Pancreas (tissue), 10 donors: ENCODE measurements at regions of chr7 and their contacts with region 1.

Region 1: GRCh38 chr7:143240291-143241168 is 18.7 kb downstream of the TAS2R40 start:
- DNase-seq: peak in 4 of 6 donors; percentile 46 to 71 (median 54)
- ATAC-seq: peak; percentile 74 to 99 (median 96)
- H3K4me3 ChIP-seq: no peak overlapping the region
- H3K27ac ChIP-seq: no peak overlapping the region
- H3K4me1 ChIP-seq: no peaks in the 10 kb centered on the region
- H3K27me3 ChIP-seq: no peaks in the 10 kb centered on the region
- CTCF ChIP-seq: peak; percentile 79 to 90 (median 82)

Region 2: GRCh38 chr7:143181349-143181748 is 59.2 kb before region 1 on chr7:
- intact Hi-C with region 1: no loop called
- DNase-seq: no peak
- ATAC-seq: no peak
- H3K4me3 ChIP-seq: no peak overlapping the region
- H3K27ac ChIP-seq: no peak overlapping the region
- H3K4me1 ChIP-seq: no peaks in the 10 kb centered on the region
- H3K27me3 ChIP-seq: no peaks in the 10 kb centered on the region
- CTCF ChIP-seq: no peak

Region 3: DNA sequence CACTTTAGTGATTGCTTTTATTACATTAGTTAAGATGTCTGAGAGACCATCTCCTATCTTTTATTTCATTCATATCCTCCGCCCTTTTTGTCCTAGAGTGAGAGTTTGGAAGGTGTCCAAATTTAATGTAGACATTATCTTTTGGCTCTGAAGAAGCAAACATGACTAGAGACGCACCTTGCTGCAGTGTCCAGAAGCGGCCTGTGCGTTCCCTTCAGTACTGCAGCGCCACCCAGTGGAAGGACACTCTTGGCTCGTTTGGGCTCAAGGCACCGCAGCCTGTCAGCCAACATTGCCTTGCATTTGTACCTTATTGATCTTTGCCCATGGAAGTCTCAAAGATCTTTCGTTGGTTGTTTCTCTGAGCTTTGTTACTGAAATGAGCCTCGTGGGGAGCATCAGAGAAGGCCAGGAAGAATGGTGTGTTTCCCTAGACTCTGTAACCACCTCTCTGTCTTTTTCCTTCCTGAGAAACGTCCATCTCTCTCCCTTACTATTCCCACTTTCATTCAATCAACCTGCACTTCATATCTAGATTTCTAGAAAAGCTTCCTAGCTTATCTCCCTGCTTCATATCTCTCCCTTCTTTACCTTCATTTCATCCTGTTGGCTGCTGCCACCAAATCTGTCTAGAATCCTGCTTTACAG is 65.0 kb after region 1 on chr7:
- intact Hi-C with region 1: loop called (anchors 5 to 10 kb)
- DNase-seq: peak; percentile 55 to 93 (median 82)
- ATAC-seq: peak; percentile 92 to 98 (median 97)
- H3K4me3 ChIP-seq: no peak overlapping the region
- H3K27ac ChIP-seq: no peak overlapping the region
- H3K4me1 ChIP-seq: no peaks in the 10 kb centered on the region
- H3K27me3 ChIP-seq: no peaks in the 10 kb centered on the region
- CTCF ChIP-seq: peak; percentile 68 to 77 (median 72)

Region 4: GRCh38 chr7:143321734-143322133 is 81.2 kb after region 1 on chr7:
- intact Hi-C with region 1: no loop called
- DNase-seq: no peak
- ATAC-seq: peak in 3 of 4 donors; percentile 52 to 63 (median 53)
- H3K4me3 ChIP-seq: no peak overlapping the region
- H3K27ac ChIP-seq: no peak overlapping the region
- H3K4me1 ChIP-seq: no peaks in the 10 kb centered on the region
- H3K27me3 ChIP-seq: no peaks in the 10 kb centered on the region
- CTCF ChIP-seq: no peak

Region 5: DNA sequence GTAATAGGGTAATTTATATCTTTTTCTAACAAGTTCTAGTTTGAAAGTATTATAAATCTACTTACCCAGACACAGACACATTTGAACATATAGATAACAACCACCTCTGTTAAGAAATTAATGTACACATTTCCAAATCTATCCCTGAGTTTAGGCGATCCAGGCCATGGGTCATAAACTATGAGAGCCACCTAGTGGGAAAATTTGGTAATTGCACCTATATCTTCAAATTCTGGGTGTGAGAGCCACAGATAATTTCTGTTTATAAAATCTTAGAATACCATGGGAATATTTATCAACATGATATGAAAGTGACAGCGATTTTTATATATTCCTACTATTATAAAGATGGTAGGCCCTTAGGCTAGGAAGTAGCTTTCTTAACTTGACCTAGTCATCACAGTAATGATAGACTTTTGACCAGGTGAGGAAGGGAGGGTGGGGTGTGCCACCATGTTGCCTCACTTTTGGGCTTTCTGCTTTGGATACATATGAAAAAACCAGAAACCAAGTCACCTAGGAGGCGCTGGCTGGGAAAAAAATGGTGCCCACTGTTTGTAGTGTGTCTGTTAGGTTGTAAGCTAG is 176.1 kb after region 1 on chr7:
- intact Hi-C with region 1: loop called in 1 of 3 experiments (anchors 5 kb)
- DNase-seq: no peak
- ATAC-seq: peak; percentile 46 to 86 (median 70)
- H3K4me3 ChIP-seq: no peak overlapping the region
- H3K27ac ChIP-seq: no peak overlapping the region
- H3K4me1 ChIP-seq: no peaks in the 10 kb centered on the region
- H3K27me3 ChIP-seq: no peaks in the 10 kb centered on the region
- CTCF ChIP-seq: peak; percentile 46 to 74 (median 62)